ENCODE measurements at regions of chr1 and their contacts with region 1.

Region 1: DNA sequence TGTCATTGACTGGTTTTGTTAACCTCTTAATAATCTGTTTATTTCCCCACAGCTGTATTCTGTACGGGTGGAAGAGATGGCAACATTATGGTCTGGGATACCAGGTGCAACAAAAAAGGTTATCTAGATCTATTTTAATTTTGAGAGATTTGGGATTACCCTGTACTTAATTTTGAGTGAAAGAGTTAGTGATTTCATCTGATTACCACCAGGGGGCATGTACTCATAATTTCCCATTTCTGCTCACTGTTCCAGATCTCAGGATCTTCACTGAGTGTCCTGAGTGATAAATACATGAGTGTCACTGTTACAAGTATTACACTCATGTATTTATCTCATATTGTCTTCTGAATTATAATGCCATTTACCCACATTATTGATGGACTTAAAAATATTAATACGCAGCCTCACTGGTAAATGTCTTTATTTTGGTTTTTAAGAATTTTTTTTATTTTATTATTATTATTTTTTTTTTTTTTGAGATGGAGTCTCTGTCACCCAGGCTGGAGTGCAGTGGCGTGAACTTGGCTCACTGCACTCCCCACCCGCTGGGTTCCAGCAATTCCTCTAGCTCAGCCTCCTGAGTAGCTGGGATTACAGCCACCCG is 27.4 kb downstream of the DTL start:
- DNase-seq: no peak
- H3K4me3 ChIP-seq: no peak overlapping the region
- CTCF ChIP-seq: peak; percentile 63

Region 2: DNA sequence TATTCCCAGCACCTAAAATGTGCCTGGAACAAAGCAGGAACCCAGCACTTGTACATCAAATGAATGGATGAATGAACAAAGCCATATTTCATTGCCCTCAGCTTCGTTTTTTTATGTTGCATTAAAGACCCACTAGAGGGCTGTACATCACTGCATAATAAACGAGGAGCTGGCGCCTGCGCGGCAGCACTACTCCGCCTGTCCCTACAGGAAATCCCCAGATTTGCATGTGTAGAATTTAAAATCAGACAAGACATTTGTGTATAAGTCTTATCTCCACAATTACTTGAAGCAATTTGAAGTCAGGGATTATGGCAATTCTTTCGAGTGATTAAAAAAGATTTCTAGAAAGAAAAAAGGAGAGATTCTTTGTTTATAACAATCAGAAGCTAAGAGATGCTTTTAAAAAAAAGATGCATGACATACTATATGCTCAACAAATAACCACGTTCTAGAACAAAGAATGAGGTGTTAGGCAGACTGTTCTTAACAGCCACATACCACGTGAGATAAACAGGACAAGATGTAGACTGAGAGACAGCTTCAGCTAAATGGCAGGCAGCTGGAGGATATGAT is 382.1 kb before region 1 on chr1:
- CTCF ChIA-PET with region 1: interaction called, 17 read pairs
- POLR2A ChIA-PET with region 1: no interaction called
- DNase-seq: peak; percentile 57
- H3K4me3 ChIP-seq: no peak overlapping the region
- CTCF ChIP-seq: peak; percentile 58

Region 3: GRCh38 chr1:211761400-211761799 is 301.5 kb before region 1 on chr1:
- CTCF ChIA-PET with region 1: no interaction called
- POLR2A ChIA-PET with region 1: no interaction called
- DNase-seq: no peak
- H3K4me3 ChIP-seq: no peak overlapping the region
- CTCF ChIP-seq: no peak

Region 4: GRCh38 chr1:212291505-212292134 is 228.7 kb after region 1 on chr1:
- CTCF ChIA-PET with region 1: interaction called, 71 read pairs
- POLR2A ChIA-PET with region 1: no interaction called
- DNase-seq: no peak
- H3K4me3 ChIP-seq: no peak overlapping the region
- CTCF ChIP-seq: peak; percentile 57

Region 5: DNA sequence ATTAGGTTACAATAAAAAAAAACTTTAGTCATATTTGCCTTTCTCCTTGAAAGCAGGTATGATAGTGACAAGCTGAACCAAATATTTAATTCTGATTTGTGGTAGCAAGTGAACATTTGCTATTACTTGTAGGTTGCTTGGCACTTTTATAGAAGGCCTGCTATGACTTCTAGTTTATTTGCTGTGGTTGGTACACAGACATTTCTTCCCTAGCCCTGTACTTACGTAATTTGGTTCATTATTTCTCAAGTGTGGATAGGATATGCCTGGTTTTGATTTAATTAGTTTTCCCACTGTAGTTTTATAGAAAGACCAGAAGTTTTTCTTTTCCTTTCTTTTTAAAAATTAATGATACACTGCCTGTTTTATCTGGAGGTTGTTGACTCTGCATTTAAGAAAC is 278.2 kb after region 1 on chr1:
- CTCF ChIA-PET with region 1: interaction called, 18 read pairs
- POLR2A ChIA-PET with region 1: no interaction called
- DNase-seq: no peak
- H3K4me3 ChIP-seq: no peak overlapping the region
- CTCF ChIP-seq: no peak

Region 6: DNA sequence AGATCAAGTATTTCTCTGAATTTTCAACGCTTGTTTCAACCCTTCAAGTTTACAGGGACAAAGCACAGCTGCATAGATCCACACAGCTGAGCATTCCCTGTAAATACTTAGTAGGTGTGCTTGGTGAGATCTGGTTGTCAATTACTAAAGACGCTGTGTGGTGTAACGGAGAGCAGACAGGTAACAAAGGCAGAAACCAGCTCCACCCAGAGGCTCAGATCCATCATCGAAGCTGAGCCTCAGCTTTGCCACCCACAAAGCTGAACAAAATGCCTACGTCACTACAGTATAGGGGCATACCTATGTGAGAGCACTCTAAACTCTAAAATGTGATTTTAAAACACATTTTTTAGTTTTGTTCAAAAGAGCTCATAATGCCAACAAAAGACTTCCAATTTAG is 313.1 kb after region 1 on chr1:
- CTCF ChIA-PET with region 1: interaction called, 10 read pairs
- POLR2A ChIA-PET with region 1: no interaction called
- DNase-seq: no peak
- H3K4me3 ChIP-seq: no peak overlapping the region
- CTCF ChIP-seq: no peak

Region 7: GRCh38 chr1:212578041-212578440 is 515.1 kb after region 1 on chr1:
- CTCF ChIA-PET with region 1: no interaction called
- POLR2A ChIA-PET with region 1: no interaction called
- DNase-seq: no peak
- H3K4me3 ChIP-seq: no peak overlapping the region
- CTCF ChIP-seq: no peak